Activated CD4-positive, alpha-beta memory T cell treated with anti-CD3 and anti-CD28 coated beads for 36 hours (primary cell): ENCODE measurements at regions of chr1 and their contacts with region 1.

Region 1: GRCh38 chr1:23772049-23772853 is 6.0 kb upstream of the PITHD1 start:
- DNase-seq: peak; percentile 91
- H3K4me3 Mint-ChIP-seq: no peak overlapping the region
- H3K27ac Mint-ChIP-seq: no peak overlapping the region
- H3K4me1 Mint-ChIP-seq: peaks cover 22% of the 10 kb centered on the region
- H3K27me3 Mint-ChIP-seq: no peaks in the 10 kb centered on the region

Region 2: GRCh38 chr1:23751050-23751814 is 21.0 kb before region 1 on chr1:
- CTCF ChIA-PET with region 1: interaction called, 14 read pairs
- POLR2A ChIA-PET with region 1: no interaction called
- intact Hi-C with region 1: no loop called
- DNase-seq: peak; percentile 50
- H3K4me3 Mint-ChIP-seq: no peak overlapping the region
- H3K27ac Mint-ChIP-seq: no peak overlapping the region
- H3K4me1 Mint-ChIP-seq: peaks cover 28% of the 10 kb centered on the region
- H3K27me3 Mint-ChIP-seq: no peaks in the 10 kb centered on the region

Region 3: GRCh38 chr1:23790696-23791515 is 18.7 kb after region 1 on chr1 and contains the start of gene LYPLA2:
- CTCF ChIA-PET with region 1: interaction called, 11 read pairs
- POLR2A ChIA-PET with region 1: interaction called, 40 read pairs
- intact Hi-C with region 1: no loop called
- DNase-seq: peak; percentile 93
- H3K4me3 Mint-ChIP-seq: peak within 1 kb of the TSS; percentile 98
- H3K27ac Mint-ChIP-seq: peak within 1 kb of the TSS; percentile 89
- H3K4me1 Mint-ChIP-seq: peaks cover 29% of the 10 kb centered on the region
- H3K27me3 Mint-ChIP-seq: no peaks in the 10 kb centered on the region
- total RNA-seq, gene LYPLA2: 70.5 to 71.1 TPM

Region 4: GRCh38 chr1:23800400-23801337 is 28.4 kb after region 1 on chr1 and contains the start of gene GALE:
- CTCF ChIA-PET with region 1: interaction called, 38 read pairs
- POLR2A ChIA-PET with region 1: interaction called, 3 read pairs
- intact Hi-C with region 1: no loop called
- DNase-seq: peak; percentile 98
- H3K4me3 Mint-ChIP-seq: peak within 1 kb of the TSS; percentile 94
- H3K27ac Mint-ChIP-seq: peak within 1 kb of the TSS; percentile 90
- H3K4me1 Mint-ChIP-seq: peaks cover 14% of the 10 kb centered on the region
- H3K27me3 Mint-ChIP-seq: no peaks in the 10 kb centered on the region
- total RNA-seq, gene GALE: 49.4 to 54.9 TPM

Region 5: DNA sequence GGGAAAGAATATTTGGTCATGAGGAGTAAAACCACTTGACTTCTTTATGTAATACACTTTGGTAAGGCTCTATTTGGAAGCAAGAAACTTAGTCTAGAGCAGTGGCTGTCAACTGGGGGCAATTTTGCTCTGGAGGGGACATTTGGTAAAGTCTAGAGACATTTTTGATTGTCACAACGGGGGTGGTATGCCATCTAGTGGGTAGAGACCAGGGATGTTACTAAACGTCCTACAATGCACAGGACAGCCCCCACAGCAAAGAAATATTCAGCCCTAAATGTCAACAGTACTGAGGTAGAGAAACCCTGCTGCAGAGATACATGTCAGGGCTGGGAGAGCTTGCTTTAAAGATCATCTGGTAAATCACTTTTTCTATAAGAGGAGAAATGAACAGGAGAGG is 82.3 kb after region 1 on chr1:
- CTCF ChIA-PET with region 1: interaction called, 13 read pairs
- POLR2A ChIA-PET with region 1: no interaction called
- intact Hi-C with region 1: no loop called
- DNase-seq: no peak
- H3K4me3 Mint-ChIP-seq: no peak overlapping the region
- H3K27ac Mint-ChIP-seq: no peak overlapping the region
- H3K4me1 Mint-ChIP-seq: no peaks in the 10 kb centered on the region
- H3K27me3 Mint-ChIP-seq: no peaks in the 10 kb centered on the region

Region 6: DNA sequence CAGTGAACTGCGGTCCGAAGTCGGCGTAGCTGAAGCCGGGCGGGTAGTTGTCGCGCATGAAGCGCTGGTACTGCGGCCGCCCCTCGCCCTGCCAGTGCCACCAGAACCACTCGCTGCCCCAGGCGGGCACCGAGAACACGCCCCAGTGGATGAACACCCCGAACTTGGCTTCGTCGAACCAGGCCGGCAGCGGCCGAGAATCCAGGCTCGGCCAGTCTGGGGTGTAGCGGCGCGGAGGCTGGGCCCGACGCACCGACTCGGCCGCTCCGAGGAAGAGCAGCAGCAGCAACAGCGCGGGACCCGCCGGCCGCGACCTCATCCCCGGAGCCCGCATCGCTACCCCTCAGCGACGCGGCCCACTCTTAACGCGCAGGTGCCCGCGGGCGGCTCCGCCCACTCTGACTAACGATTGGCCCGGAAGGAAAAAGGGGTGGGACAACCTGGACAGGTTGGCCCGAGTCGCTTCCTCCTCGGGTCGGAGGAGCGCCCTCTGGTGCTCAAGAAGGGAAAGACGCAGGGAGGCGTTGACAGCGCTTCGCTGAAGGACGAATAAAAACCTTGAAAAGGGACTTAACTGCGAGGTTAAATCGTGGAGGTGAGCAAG is 95.8 kb after region 1 on chr1 and contains the start of gene FUCA1:
- CTCF ChIA-PET with region 1: interaction called, 12 read pairs
- POLR2A ChIA-PET with region 1: no interaction called
- intact Hi-C with region 1: loop called (anchors 1 kb)
- DNase-seq: peak; percentile 95
- H3K4me3 Mint-ChIP-seq: peak within 1 kb of the TSS; percentile 77
- H3K27ac Mint-ChIP-seq: no peak within 1 kb of the TSS
- H3K4me1 Mint-ChIP-seq: peaks cover 19% of the 10 kb centered on the region
- H3K27me3 Mint-ChIP-seq: peaks cover 1% of the 10 kb centered on the region
- total RNA-seq, gene FUCA1: 5.3 to 5.4 TPM

Region 7: GRCh38 chr1:23916209-23917131 is 144.2 kb after region 1 on chr1:
- CTCF ChIA-PET with region 1: interaction called, 42 read pairs
- POLR2A ChIA-PET with region 1: no interaction called
- intact Hi-C with region 1: no loop called
- DNase-seq: peak; percentile 69
- H3K4me3 Mint-ChIP-seq: no peak overlapping the region
- H3K27ac Mint-ChIP-seq: no peak overlapping the region
- H3K4me1 Mint-ChIP-seq: peaks cover 11% of the 10 kb centered on the region
- H3K27me3 Mint-ChIP-seq: no peaks in the 10 kb centered on the region